Naive thymus-derived CD4-positive, alpha-beta T cell (primary cell): ENCODE measurements at regions of chr7 and their contacts with region 1.

Region 1: GRCh38 chr7:4681886-4682620 is at the start of gene FOXK1:
- DNase-seq: peak; percentile 69 to 87 (median 79)
- ATAC-seq: peak; percentile 92
- H3K4me3 ChIP-seq: peak within 1 kb of the TSS; percentile 75
- H3K4me3 Mint-ChIP-seq: peak within 1 kb of the TSS; percentile 90 to 100 (median 97)
- H3K27ac ChIP-seq: peak within 1 kb of the TSS; percentile 92
- H3K27ac Mint-ChIP-seq: peak within 1 kb of the TSS; percentile 68 to 99 (median 97)
- H3K4me1 ChIP-seq: peaks cover 13 to 28% of the 10 kb centered on the region in 2 donors
- H3K4me1 Mint-ChIP-seq: peaks cover 24 to 41% (median 31%) of the 10 kb centered on the region in 7 donors
- H3K27me3 ChIP-seq: no peaks in the 10 kb centered on the region
- H3K27me3 Mint-ChIP-seq: no peaks in the 10 kb centered on the region
- total RNA-seq, gene FOXK1: 37.7 to 69.0 (median 56.9) TPM

Region 2: DNA sequence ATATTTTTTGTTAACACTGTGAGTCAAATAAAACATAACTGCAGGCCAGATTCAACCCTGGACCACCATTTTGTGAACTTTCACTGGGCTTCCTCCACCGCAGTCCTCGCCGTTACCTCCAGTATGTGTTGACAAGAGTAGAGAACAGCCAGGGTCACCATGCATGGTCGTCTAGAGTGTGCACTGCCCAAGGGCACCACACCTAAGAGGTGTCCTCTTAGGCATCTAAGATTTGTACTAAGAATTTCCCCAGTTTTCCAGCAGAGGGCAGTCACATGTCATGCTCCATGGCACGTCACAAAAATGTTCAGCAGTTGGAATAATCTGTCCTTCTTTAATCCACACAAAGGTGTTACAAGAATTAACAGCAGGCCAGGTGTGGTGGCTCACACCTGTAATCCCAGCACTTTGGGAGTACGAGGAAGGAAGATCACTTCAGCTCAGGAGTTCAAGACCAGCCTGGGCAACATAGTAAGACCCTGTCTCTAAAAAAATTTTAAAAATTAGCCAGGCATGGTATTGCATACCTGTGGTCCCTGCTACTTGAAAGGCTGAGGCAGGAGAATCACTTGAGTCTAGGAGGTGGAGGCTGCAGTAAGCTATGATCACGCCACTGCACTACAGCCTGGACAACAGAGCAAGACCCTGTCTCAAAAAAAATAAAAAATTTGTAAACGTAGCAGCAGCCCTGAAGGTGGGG is 71.1 kb before region 1 on chr7:
- CTCF ChIA-PET with region 1: interaction called, 5 read pairs
- POLR2A ChIA-PET with region 1: no interaction called
- intact Hi-C with region 1: loop called (anchors 1 kb)
- DNase-seq: peak; percentile 23 to 77 (median 71)
- ATAC-seq: peak; percentile 91
- H3K4me3 ChIP-seq: no peak overlapping the region
- H3K4me3 Mint-ChIP-seq: no peak overlapping the region
- H3K27ac ChIP-seq: no peak overlapping the region
- H3K27ac Mint-ChIP-seq: peak overlapping the region in 3 of 9 donors; percentile 5 to 67 (median 26)
- H3K4me1 ChIP-seq: peaks cover 0 to 12% of the 10 kb centered on the region in 2 donors
- H3K4me1 Mint-ChIP-seq: peaks cover 11 to 28% (median 20%) of the 10 kb centered on the region in 7 donors
- H3K27me3 ChIP-seq: no peaks in the 10 kb centered on the region
- H3K27me3 Mint-ChIP-seq: peaks cover 0 to 3% (median 0%) of the 10 kb centered on the region in 5 donors

Region 3: GRCh38 chr7:4725014-4725849 is 43.2 kb after region 1 on chr7:
- CTCF ChIA-PET with region 1: no interaction called
- POLR2A ChIA-PET with region 1: interaction called, 3 read pairs
- intact Hi-C with region 1: loop called (anchors 2 kb)
- DNase-seq: peak; percentile 28 to 70 (median 55)
- ATAC-seq: peak; percentile 80
- H3K4me3 ChIP-seq: peak overlapping the region; percentile 57
- H3K4me3 Mint-ChIP-seq: peak overlapping the region; percentile 85 to 95 (median 90)
- H3K27ac ChIP-seq: peak overlapping the region; percentile 86
- H3K27ac Mint-ChIP-seq: peak overlapping the region; percentile 67 to 97 (median 86)
- H3K4me1 ChIP-seq: peaks cover 4 to 15% of the 10 kb centered on the region in 2 donors
- H3K4me1 Mint-ChIP-seq: peaks cover 34 to 71% (median 62%) of the 10 kb centered on the region in 7 donors
- H3K27me3 ChIP-seq: no peaks in the 10 kb centered on the region
- H3K27me3 Mint-ChIP-seq: no peaks in the 10 kb centered on the region

Region 4: DNA sequence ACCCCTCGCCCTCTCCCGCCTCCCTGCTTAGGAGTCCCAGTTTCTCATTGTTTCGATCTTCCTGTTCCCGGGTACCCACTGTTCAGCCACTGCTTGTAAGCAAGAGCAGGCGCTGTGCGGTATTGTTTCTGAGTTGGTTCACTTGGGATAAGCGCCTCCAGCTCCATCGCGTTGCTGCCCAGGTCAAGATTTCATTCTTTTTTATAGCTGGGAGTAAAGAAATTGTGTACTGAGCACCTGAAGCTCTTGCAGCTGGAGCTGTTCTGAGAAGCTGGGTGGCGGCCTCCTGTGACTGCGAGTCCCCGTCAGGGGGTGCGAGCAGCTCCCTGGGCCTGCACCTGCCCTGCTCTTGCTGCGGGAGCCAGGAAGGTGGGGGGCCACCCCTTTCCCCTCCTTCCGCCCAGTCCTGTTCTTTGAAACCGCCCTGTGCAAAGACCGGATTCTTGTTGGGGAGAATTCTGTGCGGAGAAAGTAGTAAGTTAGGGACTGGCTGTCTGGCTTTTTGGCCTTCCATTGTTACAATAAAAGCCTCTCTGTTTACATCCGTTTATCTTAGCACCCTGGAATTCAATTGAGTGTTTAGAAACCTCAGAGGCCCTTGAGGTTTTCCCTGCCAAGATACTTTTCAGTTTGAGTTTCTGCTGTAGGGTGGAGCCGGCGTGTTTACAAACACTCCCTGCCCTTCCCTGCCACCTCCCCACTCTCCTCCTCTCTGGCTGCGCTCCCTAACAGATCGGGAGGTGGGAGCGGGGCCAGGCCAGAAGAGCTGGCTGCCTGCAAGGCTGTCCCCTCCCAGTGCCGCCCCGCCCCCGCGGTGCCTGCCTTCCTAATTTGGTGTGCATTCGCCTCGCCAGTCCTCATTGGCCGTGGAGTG is 62.6 kb after region 1 on chr7:
- CTCF ChIA-PET with region 1: interaction called, 3 read pairs
- POLR2A ChIA-PET with region 1: interaction called, 8 read pairs
- intact Hi-C with region 1: loop called (anchors 1 kb)
- DNase-seq: peak; percentile 61 to 84 (median 80)
- ATAC-seq: peak; percentile 76
- H3K4me3 ChIP-seq: peak overlapping the region; percentile 65
- H3K4me3 Mint-ChIP-seq: peak overlapping the region; percentile 84 to 92 (median 88)
- H3K27ac ChIP-seq: peak overlapping the region; percentile 82
- H3K27ac Mint-ChIP-seq: peak overlapping the region; percentile 90 to 99 (median 96)
- H3K4me1 ChIP-seq: peaks cover 15 to 61% of the 10 kb centered on the region in 2 donors
- H3K4me1 Mint-ChIP-seq: peaks cover 45 to 89% (median 79%) of the 10 kb centered on the region in 7 donors
- H3K27me3 ChIP-seq: no peaks in the 10 kb centered on the region
- H3K27me3 Mint-ChIP-seq: no peaks in the 10 kb centered on the region

Region 5: DNA sequence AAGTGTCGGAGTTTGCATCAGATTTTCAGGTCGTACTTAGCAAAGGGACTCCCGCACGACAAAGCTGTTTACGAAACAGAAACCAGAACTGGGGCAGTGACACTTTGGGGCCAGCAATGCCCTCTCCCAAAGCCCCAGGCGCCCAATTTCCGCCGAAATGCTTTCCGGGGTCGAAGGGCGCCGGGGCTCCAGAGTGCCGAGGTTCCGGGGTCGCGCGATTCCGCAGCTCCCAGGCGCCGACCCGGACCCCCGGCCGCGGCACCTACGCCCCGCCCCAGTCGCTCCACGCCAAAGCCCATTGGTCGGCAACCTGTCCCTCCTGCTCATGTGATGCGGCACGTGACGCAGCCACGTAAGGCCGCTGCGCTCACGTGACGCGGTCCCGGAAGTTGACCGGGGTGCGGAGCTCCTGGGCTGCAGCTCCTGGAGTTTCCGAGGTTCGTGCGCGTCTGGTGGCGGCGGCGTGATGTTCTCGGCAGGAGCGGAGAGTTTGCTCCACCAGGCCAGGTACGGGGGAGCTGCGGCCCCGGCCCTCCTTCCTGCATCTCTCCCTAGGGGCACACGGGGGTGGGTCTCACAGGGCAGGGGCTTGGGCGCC is 93.3 kb after region 1 on chr7 and contains the start of gene AP5Z1:
- CTCF ChIA-PET with region 1: no interaction called
- POLR2A ChIA-PET with region 1: interaction called, 19 read pairs
- intact Hi-C with region 1: loop called (anchors 1 kb)
- DNase-seq: peak; percentile 85 to 95 (median 94)
- ATAC-seq: peak; percentile 95
- H3K4me3 ChIP-seq: peak within 1 kb of the TSS; percentile 95
- H3K4me3 Mint-ChIP-seq: peak within 1 kb of the TSS; percentile 93 to 99 (median 98)
- H3K27ac ChIP-seq: peak within 1 kb of the TSS; percentile 94
- H3K27ac Mint-ChIP-seq: peak within 1 kb of the TSS; percentile 93 to 99 (median 98)
- H3K4me1 ChIP-seq: peaks cover 28 to 31% of the 10 kb centered on the region in 2 donors
- H3K4me1 Mint-ChIP-seq: peaks cover 29 to 62% (median 44%) of the 10 kb centered on the region in 7 donors
- H3K27me3 ChIP-seq: no peaks in the 10 kb centered on the region
- H3K27me3 Mint-ChIP-seq: no peaks in the 10 kb centered on the region
- total RNA-seq, gene AP5Z1: 69.4 to 114 (median 90.1) TPM

Region 6: GRCh38 chr7:5045558-5046396 is 363.7 kb after region 1 on chr7 and contains the start of gene RBAK:
- CTCF ChIA-PET with region 1: no interaction called
- POLR2A ChIA-PET with region 1: no interaction called
- intact Hi-C with region 1: loop called (anchors 2 to 5 kb)
- DNase-seq: peak; percentile 74 to 91 (median 86)
- ATAC-seq: peak; percentile 100
- H3K4me3 ChIP-seq: peak within 1 kb of the TSS; percentile 76
- H3K4me3 Mint-ChIP-seq: peak within 1 kb of the TSS; percentile 92 to 98 (median 96)
- H3K27ac ChIP-seq: peak within 1 kb of the TSS; percentile 95
- H3K27ac Mint-ChIP-seq: peak within 1 kb of the TSS; percentile 82 to 97 (median 92)
- H3K4me1 ChIP-seq: peaks cover 4 to 7% of the 10 kb centered on the region in 2 donors
- H3K4me1 Mint-ChIP-seq: peaks cover 16 to 57% (median 51%) of the 10 kb centered on the region in 7 donors
- H3K27me3 ChIP-seq: no peaks in the 10 kb centered on the region
- H3K27me3 Mint-ChIP-seq: peaks cover 0 to 2% (median 0%) of the 10 kb centered on the region in 5 donors
- total RNA-seq, gene RBAK: 11.8 to 21.8 (median 17.5) TPM